PC-9 (cell line): ENCODE measurements at regions of chr6 and their contacts with region 1.

Region 1: DNA sequence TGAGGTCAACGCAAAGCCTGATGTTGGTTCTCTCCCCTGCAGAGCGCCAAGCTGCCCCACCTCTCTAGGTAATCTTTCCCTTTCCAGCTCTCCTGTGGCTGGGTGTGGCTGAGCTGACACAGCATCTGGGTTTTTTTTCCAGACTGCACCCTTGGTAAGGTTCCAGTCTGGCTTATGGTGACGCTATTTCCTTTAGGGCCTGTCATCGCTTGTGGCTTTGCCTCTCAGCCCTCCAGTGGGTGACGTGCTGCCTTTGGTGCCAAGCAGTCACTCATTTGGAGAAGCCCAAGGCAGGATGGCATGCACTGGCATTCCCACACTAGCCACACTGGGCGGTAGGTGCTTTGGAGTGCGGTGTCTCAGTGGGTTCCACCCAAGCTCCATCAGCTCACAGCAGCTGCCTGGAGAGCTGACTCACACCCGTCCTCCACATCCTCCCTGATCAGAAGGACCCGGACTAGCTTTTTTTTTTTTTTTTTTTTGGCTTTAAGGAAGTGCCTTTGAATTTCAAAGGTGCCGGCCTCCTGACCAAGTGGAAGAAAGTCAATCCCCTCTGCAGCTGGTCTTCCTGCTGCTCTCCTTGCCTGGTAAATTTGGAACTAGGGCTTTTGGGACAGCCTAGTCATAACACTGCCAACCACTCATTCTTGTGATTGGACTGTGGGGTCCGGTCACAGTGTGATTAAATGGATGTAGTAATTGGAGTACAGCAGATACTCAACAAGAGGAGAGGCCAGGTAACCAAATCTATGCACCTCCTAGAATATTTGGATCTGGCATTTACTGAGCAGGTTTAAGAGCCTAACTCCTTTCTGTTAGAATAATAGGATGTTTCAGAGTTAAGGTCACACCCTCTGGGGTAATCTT is 153.6 kb downstream of the CD83 start:
- DNase-seq: peak; percentile 98
- H3K4me3 ChIP-seq: no peak overlapping the region
- H3K27ac ChIP-seq: peak overlapping the region; percentile 92
- H3K4me1 ChIP-seq: peaks cover 20% of the 10 kb centered on the region
- H3K27me3 ChIP-seq: no peaks in the 10 kb centered on the region
- CTCF ChIP-seq: no peak; the same call in 1 of the 2 replicates

Region 2: GRCh38 chr6:14290772-14291330 is 19.7 kb after region 1 on chr6:
- CTCF ChIA-PET with region 1: no interaction called
- POLR2A ChIA-PET with region 1: no interaction called
- intact Hi-C with region 1: no loop called
- DNase-seq: no peak
- H3K4me3 ChIP-seq: no peak overlapping the region
- H3K27ac ChIP-seq: no peak overlapping the region
- H3K4me1 ChIP-seq: peaks cover 20% of the 10 kb centered on the region
- H3K27me3 ChIP-seq: no peaks in the 10 kb centered on the region
- CTCF ChIP-seq: no peak

Region 3: GRCh38 chr6:14316635-14317386 is 45.7 kb after region 1 on chr6:
- CTCF ChIA-PET with region 1: no interaction called
- POLR2A ChIA-PET with region 1: interaction called, 10 read pairs
- intact Hi-C with region 1: no loop called
- DNase-seq: no peak
- H3K4me3 ChIP-seq: no peak overlapping the region
- H3K27ac ChIP-seq: no peak overlapping the region
- H3K4me1 ChIP-seq: no peaks in the 10 kb centered on the region
- H3K27me3 ChIP-seq: no peaks in the 10 kb centered on the region
- CTCF ChIP-seq: no peak

Region 4: GRCh38 chr6:14711056-14711703 is 440.0 kb after region 1 on chr6:
- CTCF ChIA-PET with region 1: interaction called, 3 read pairs
- POLR2A ChIA-PET with region 1: interaction called, 4 read pairs
- intact Hi-C with region 1: loop called (anchors 1 kb)
- DNase-seq: peak; percentile 72 to 82
- H3K4me3 ChIP-seq: no peak overlapping the region
- H3K27ac ChIP-seq: peak overlapping the region; percentile 91
- H3K4me1 ChIP-seq: peaks cover 50% of the 10 kb centered on the region
- H3K27me3 ChIP-seq: no peaks in the 10 kb centered on the region
- CTCF ChIP-seq: peak; percentile 66

Region 5: GRCh38 chr6:14743465-14744211 is 472.5 kb after region 1 on chr6:
- CTCF ChIA-PET with region 1: no interaction called
- POLR2A ChIA-PET with region 1: no interaction called
- intact Hi-C with region 1: loop called (anchors 1 kb)
- DNase-seq: peak; percentile 94 to 96
- H3K4me3 ChIP-seq: peak overlapping the region; percentile 32; the same call in 1 of the 2 replicates
- H3K27ac ChIP-seq: peak overlapping the region; percentile 100
- H3K4me1 ChIP-seq: peaks cover 37% of the 10 kb centered on the region
- H3K27me3 ChIP-seq: no peaks in the 10 kb centered on the region
- CTCF ChIP-seq: no peak

Region 6: DNA sequence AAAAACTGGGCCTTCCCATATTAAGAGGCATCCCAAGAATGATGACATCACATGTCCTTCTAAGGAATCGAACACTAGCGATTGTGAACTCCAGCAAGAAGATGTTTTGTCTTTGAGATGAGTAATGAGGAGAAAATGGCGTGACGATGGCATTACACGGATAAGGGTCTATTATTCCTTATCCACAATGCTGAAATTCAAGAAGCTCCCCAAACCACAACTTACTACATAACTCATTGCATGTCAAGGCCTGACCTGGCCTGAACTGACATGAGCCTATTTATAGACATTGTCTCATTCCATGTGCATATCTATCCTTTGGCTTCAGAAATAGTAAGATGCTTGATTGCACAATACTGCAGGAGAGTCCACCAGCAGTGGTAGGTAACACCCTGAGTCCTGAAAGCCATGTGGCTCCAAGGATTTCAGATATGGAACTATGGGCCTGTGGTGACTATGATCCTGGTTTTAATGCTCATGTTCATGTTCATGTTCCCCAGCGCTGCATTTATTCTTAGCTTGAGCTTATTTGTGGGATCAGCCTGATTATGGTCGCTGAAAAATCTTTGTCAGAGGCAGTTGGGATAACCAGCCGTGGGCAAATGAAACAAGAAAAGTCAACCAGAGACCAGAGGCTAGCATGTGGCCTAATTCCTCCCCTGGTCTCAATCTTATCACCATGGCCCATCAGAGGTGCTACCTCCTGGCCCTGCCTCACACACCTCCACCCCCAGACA is 791.5 kb after region 1 on chr6:
- CTCF ChIA-PET with region 1: no interaction called
- POLR2A ChIA-PET with region 1: no interaction called
- intact Hi-C with region 1: loop called (anchors 2 kb)
- DNase-seq: peak in 1 of 2 experiments; percentile 86
- H3K4me3 ChIP-seq: no peak overlapping the region
- H3K27ac ChIP-seq: no peak overlapping the region
- H3K4me1 ChIP-seq: peaks cover 7% of the 10 kb centered on the region; the same call in 1 of the 2 replicates
- H3K27me3 ChIP-seq: no peaks in the 10 kb centered on the region
- CTCF ChIP-seq: no peak